BJ (cell line): ENCODE measurements at regions of chr9 and their contacts with region 1.

Region 1: DNA sequence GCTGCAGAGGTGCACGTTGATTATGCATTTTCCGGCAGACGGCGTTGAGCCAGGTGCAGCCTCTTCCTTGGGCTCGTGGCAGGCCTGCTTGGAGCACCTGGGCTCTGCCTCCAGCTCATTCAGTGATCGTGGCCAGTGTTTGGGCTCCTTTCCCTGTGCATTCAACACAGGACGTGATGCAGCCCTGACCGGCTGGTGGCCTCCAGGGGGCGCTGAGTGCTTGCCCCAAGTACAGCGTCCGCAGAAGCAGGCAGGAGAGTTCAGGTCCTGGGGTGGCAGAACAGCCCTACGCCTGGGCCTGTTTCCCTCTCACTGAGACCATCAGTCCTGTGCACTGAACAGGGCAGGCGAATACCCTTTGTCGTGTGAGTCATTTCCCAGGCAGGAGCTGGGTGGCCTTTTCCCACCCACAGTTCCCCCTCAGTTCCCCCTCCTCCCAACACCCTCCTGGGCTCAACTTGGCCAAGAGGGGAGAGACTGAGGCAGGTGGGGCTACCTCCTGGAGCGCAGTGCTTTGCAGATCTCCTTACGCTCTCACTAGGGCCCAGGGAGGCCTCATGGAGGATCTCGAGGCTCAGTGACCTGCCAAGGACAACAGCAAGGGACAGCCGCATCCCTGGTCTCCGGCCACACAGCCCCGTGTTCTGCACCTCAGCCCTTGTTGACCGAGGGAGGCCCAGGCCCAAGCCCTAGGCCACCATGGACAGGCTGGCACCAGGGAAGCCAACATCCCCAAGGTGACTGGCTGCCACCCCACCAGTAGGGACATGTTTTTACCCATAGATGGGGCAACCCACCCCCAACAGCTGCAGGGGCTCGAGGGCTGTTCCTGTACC is 52.9 kb downstream of the LRSAM1 start:
- DNase-seq: no peak
- H3K4me3 ChIP-seq: no peak overlapping the region
- H3K27me3 ChIP-seq: no peaks in the 10 kb centered on the region
- CTCF ChIP-seq: peak; percentile 90

Region 2: GRCh38 chr9:127384901-127385300 is 119.3 kb before region 1 on chr9:
- CTCF ChIA-PET with region 1: no interaction called
- POLR2A ChIA-PET with region 1: no interaction called
- DNase-seq: no peak
- H3K4me3 ChIP-seq: no peak overlapping the region
- H3K27me3 ChIP-seq: peaks cover 4% of the 10 kb centered on the region; the same call in 1 of the 2 replicates
- CTCF ChIP-seq: no peak

Region 3: DNA sequence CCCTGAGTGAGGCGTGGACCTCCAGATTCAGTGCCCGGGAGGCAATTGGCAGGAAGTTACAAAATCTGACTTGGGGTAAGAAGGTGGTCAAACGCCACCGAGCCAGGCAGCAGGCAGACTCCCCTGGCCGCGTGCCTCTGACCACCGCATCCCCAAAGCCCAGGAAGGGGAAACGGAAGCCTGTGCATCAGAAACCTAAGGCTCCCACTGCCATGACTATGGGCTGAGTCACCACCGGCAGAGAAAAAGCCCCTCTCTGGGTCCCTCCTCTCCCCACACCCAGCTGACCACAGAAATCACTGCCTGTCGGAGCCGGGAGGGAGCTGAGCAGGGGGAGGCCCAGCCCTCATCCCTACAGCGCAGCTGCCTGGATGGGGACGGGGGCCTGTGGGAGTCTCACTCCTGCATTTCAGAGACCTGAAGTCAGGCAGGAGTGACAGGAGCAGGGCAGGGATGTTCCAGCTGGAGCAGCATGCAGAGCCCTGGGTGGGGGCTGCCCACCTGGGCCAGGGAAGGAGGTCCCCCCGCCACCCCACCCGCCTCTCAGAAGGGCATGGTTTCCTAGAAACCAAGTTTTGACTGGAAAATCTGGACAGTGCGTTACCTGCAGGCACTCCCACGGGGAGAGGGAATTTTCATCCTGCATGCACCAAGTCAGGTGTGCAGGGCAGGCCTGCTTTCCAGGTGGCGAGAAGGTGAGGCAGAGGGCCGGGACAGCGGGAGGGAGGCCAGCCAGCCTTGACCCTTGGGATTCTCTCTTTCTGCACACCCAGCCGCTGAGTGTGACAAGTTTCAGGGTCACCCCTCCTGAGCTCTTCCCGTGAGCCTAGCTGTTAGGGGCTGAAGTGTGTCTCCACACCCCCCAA is 15.4 kb after region 1 on chr9:
- CTCF ChIA-PET with region 1: interaction called, 20 read pairs
- POLR2A ChIA-PET with region 1: no interaction called
- DNase-seq: peak; percentile 83
- H3K4me3 ChIP-seq: no peak overlapping the region
- H3K27me3 ChIP-seq: no peaks in the 10 kb centered on the region
- CTCF ChIP-seq: no peak

Region 4: DNA sequence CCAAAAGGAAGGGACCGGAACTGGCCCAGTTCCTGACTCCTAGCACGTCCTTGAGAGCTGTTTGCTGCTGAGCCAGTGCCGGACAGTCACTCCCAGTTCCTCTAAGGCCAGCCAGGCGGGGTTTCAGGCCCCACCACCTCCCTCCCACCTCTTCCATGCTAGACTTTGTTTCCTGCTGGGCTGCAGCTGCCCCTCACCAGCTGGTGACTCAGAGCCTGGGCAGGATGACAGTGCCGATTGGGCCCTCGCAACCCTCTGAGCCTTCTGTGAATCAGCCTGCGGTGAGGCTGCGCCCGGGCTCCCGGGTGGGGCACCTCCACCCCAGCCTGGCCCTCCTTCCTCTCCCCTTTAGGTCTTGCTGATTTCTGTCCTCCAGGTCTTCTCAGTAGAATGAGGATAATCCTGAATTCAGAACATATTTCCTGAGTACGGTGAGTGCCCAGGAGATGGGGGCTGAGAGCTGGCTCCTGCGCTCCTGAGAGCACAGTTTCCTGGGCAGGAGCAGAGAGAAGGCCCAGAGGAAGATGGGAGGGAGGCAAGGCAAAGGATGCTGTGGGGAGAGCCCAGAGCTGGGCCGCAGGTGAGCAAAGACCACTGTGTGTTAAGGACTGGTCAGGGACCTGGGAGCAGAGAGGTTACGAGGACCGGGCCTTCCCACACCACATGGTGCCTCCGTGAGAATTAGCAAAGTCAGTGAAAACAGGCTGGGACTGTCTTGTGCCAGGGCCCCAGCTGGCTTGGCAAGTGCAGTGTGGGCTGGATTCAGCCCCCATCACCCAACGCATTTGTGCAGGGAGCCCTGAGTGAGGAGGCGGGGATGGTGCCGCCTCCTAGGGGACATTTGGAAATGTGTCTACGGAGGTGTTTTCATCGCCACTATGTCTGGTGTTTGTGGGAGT is 75.0 kb after region 1 on chr9:
- CTCF ChIA-PET with region 1: interaction called, 21 read pairs
- POLR2A ChIA-PET with region 1: no interaction called
- DNase-seq: peak; percentile 93
- H3K4me3 ChIP-seq: peak overlapping the region; percentile 46
- H3K27me3 ChIP-seq: no peaks in the 10 kb centered on the region
- CTCF ChIP-seq: peak; percentile 59

Region 5: GRCh38 chr9:127586537-127586936 is 82.4 kb after region 1 on chr9:
- CTCF ChIA-PET with region 1: interaction called, 21 read pairs
- POLR2A ChIA-PET with region 1: no interaction called
- DNase-seq: no peak
- H3K4me3 ChIP-seq: no peak overlapping the region
- H3K27me3 ChIP-seq: no peaks in the 10 kb centered on the region
- CTCF ChIP-seq: peak; percentile 91